ENCODE measurements at regions of chr12 and their contacts with region 1.

Region 1: GRCh38 chr12:12696562-12697383 is 790 bp upstream of the GPR19 start:
- DNase-seq: peak; percentile 87 to 96 (median 94)
- ATAC-seq: peak; percentile 84
- H3K4me3 ChIP-seq: peak overlapping the region; percentile 42 to 88
- H3K4me3 Mint-ChIP-seq: peak overlapping the region; percentile 93
- H3K27ac ChIP-seq: peak overlapping the region; percentile 96 to 100
- H3K27ac Mint-ChIP-seq: peak overlapping the region; percentile 100
- H3K4me1 ChIP-seq: peaks cover 20% of the 10 kb centered on the region
- H3K4me1 Mint-ChIP-seq: peaks cover 29% of the 10 kb centered on the region
- H3K27me3 ChIP-seq: no peaks in the 10 kb centered on the region
- H3K27me3 Mint-ChIP-seq: no peaks in the 10 kb centered on the region
- CTCF ChIP-seq: no peak

Region 2: GRCh38 chr12:12482959-12483358 is 213.8 kb before region 1 on chr12:
- CTCF ChIA-PET with region 1: no interaction called
- POLR2A ChIA-PET with region 1: interaction called, 3 read pairs
- intact Hi-C with region 1: loop called in 1 of 2 experiments (anchors 5 kb)
- DNase-seq: no peak
- ATAC-seq: no peak
- H3K4me3 ChIP-seq: peak overlapping the region in 1 of 2 experiments; percentile 11
- H3K4me3 Mint-ChIP-seq: peak overlapping the region; percentile 47
- H3K27ac ChIP-seq: peak overlapping the region; percentile 73 to 83
- H3K27ac Mint-ChIP-seq: peak overlapping the region; percentile 99
- H3K4me1 ChIP-seq: peaks cover 28% of the 10 kb centered on the region
- H3K4me1 Mint-ChIP-seq: peaks cover 52% of the 10 kb centered on the region
- H3K27me3 ChIP-seq: no peaks in the 10 kb centered on the region
- H3K27me3 Mint-ChIP-seq: no peaks in the 10 kb centered on the region
- CTCF ChIP-seq: no peak

Region 3: DNA sequence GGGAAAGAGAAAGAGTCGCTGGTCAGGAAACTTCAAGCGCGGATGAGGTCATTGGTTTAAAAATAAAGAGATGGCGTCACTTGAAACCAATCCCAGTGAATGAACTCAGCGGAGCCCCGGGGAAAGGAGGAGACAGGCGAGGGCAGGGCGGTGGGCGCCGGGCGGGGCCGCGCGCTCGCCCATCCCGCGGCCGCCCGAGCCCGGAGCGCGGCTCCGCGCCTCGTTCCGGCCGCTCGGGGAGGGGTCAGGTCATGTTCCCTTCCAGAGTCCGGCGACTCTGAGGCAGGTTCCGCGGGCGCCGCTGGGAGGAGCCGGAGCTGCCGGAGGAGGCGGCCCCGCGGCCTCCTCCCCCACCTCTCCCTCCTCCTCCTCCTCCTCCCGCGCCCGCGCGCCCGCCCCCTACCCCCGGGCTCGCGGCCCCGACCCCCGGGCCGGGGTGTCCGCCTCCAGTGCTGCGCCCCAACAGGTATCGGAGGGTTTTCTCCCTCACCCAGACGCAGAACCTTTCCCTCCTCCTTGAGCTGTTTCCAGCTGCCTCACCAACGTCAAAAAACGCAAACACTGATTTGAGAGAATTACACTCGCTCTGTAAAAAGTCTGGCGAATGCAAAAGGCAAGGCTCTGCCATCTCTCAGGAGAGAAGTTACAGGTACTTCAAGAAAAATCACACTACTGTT is 134.1 kb before region 1 on chr12 and contains the start of gene DUSP16:
- CTCF ChIA-PET with region 1: interaction called, 3 read pairs
- POLR2A ChIA-PET with region 1: interaction called, 8 read pairs
- intact Hi-C with region 1: loop called (anchors 1 kb)
- DNase-seq: peak; percentile 50 to 95 (median 75)
- ATAC-seq: peak; percentile 65
- H3K4me3 ChIP-seq: peak within 1 kb of the TSS; percentile 77 to 80
- H3K4me3 Mint-ChIP-seq: peak within 1 kb of the TSS; percentile 95
- H3K27ac ChIP-seq: peak within 1 kb of the TSS; percentile 92 to 96
- H3K27ac Mint-ChIP-seq: peak within 1 kb of the TSS; percentile 99
- H3K4me1 ChIP-seq: peaks cover 16% of the 10 kb centered on the region
- H3K4me1 Mint-ChIP-seq: peaks cover 43% of the 10 kb centered on the region
- H3K27me3 ChIP-seq: no peaks in the 10 kb centered on the region
- H3K27me3 Mint-ChIP-seq: no peaks in the 10 kb centered on the region
- CTCF ChIP-seq: no peak
- total RNA-seq, gene DUSP16: 27.9 to 34.1 TPM

Region 4: DNA sequence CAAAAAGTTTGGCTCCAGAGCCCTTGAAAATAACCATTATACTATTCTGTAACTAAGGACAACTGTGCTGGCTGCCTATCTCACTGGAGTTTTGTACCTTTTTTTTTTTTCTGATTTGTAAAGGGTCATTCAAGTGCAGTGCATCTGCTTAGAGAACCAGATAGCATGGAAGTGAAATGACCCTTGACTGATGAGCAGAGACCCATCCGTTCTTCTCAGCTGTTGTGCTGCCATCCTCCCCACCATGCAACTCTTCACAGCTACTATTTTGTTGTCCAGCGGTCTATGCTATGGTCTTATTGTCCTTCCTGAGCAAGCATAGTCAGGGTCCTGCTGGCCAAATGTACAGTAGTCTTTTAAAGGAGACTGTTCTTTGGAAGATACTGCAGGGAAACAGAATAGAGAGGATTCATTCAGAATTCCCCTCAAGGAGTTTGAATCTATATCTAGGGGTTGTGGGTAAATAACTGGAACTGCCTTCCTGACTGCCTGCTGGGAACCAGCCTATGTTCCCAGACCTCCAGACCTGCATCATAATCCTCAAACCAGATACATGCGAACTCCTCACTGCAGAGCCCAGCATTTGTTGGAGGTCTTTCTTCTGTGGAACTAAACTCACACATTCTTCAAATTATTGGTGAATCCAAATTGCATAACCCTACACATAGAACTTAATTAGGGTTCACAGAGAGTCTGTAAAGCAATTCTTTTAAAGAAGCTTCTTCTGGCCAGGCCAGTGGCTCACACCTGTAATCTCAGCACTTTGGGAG is 41.9 kb before region 1 on chr12:
- CTCF ChIA-PET with region 1: interaction called, 18 read pairs
- POLR2A ChIA-PET with region 1: no interaction called
- intact Hi-C with region 1: loop called in 1 of 2 experiments (anchors 5 kb)
- DNase-seq: no peak
- ATAC-seq: no peak
- H3K4me3 ChIP-seq: no peak overlapping the region
- H3K4me3 Mint-ChIP-seq: no peak overlapping the region
- H3K27ac ChIP-seq: no peak overlapping the region
- H3K27ac Mint-ChIP-seq: no peak overlapping the region
- H3K4me1 ChIP-seq: no peaks in the 10 kb centered on the region
- H3K4me1 Mint-ChIP-seq: peaks cover 11% of the 10 kb centered on the region
- H3K27me3 ChIP-seq: no peaks in the 10 kb centered on the region
- H3K27me3 Mint-ChIP-seq: no peaks in the 10 kb centered on the region
- CTCF ChIP-seq: no peak

Region 5: DNA sequence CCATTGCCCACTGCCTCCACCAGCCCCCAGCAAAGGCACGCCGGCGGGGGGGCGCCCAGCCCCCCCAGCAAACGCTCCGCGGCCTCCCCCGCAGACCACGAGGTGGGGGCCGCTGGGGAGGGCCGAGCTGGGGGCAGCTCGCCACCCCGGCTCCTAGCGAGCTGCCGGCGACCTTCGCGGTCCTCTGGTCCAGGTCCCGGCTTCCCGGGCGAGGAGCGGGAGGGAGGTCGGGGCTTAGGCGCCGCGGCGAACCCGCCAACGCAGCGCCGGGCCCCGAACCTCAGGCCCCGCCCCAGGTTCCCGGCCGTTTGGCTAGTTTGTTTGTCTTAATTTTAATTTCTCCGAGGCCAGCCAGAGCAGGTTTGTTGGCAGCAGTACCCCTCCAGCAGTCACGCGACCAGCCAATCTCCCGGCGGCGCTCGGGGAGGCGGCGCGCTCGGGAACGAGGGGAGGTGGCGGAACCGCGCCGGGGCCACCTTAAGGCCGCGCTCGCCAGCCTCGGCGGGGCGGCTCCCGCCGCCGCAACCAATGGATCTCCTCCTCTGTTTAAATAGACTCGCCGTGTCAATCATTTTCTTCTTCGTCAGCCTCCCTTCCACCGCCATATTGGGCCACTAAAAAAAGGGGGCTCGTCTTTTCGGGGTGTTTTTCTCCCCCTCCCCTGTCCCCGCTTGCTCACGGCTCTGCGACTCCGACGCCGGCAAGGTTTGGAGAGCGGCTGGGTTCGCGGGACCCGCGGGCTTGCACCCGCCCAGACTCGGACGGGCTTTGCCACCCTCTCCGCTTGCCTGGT is 20.2 kb after region 1 on chr12 and contains the start of gene CDKN1B:
- CTCF ChIA-PET with region 1: interaction called, 26 read pairs
- POLR2A ChIA-PET with region 1: interaction called, 339 read pairs
- intact Hi-C with region 1: loop called (anchors 1 kb)
- DNase-seq: peak; percentile 76 to 93 (median 86)
- ATAC-seq: peak; percentile 62
- H3K4me3 ChIP-seq: peak within 1 kb of the TSS; percentile 95 to 96
- H3K4me3 Mint-ChIP-seq: peak within 1 kb of the TSS; percentile 98
- H3K27ac ChIP-seq: peak within 1 kb of the TSS; percentile 93 to 97
- H3K27ac Mint-ChIP-seq: peak within 1 kb of the TSS; percentile 98
- H3K4me1 ChIP-seq: peaks cover 47% of the 10 kb centered on the region
- H3K4me1 Mint-ChIP-seq: peaks cover 66% of the 10 kb centered on the region
- H3K27me3 ChIP-seq: no peaks in the 10 kb centered on the region
- H3K27me3 Mint-ChIP-seq: no peaks in the 10 kb centered on the region
- CTCF ChIP-seq: no peak
- total RNA-seq, gene CDKN1B: 240 to 245 TPM

Region 6: DNA sequence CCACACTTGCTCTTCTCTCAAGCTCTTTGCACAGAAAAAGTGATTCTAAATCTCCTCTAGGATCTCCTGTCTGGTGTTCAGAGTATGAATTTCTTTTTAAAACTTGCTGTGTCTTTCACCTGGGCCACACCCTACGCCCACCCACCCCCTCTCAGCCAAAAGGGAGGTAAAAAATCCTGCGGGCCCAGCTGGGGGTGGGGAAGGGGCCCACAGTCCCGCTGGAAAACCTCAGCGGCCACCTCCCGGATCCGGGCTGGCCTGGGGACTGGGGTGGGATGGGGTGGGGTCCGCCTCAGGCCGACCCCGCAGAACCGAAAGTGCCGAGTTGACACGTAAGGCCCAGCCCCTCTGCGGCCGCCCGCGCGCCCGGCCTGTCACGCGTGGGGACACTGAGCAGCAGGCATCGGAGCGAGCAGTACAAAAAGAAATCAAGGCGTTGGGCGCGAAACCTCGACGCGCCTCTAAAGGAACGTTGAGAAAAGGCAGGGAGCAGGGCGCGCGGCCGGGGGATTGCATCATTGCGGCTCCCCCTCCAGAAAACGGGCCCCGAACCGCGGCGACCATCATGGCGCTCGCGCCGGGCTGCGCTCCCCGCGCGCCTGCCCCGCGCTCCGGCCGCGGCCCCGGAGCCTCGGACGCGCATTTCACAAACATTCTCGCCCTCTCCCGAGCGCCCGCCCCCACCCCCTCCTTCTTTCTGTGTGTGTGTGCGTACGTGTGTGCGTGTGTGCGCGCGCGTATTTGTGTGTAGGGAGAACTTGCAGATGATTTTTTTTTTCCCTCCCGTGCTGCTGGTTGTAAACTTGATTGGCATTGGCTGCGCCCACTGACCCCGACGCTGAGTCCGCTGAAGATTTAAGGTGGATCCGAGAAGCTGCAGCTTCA is 28.1 kb after region 1 on chr12:
- CTCF ChIA-PET with region 1: interaction called, 7 read pairs
- POLR2A ChIA-PET with region 1: interaction called, 339 read pairs
- intact Hi-C with region 1: loop called (anchors 1 kb)
- DNase-seq: peak in 8 of 9 experiments; percentile 82 to 98 (median 86)
- ATAC-seq: peak; percentile 57
- H3K4me3 ChIP-seq: peak overlapping the region; percentile 90 to 92
- H3K4me3 Mint-ChIP-seq: peak overlapping the region; percentile 82
- H3K27ac ChIP-seq: peak overlapping the region; percentile 93 to 97
- H3K27ac Mint-ChIP-seq: peak overlapping the region; percentile 99
- H3K4me1 ChIP-seq: peaks cover 51% of the 10 kb centered on the region
- H3K4me1 Mint-ChIP-seq: peaks cover 52% of the 10 kb centered on the region
- H3K27me3 ChIP-seq: no peaks in the 10 kb centered on the region
- H3K27me3 Mint-ChIP-seq: no peaks in the 10 kb centered on the region
- CTCF ChIP-seq: no peak

Region 7: DNA sequence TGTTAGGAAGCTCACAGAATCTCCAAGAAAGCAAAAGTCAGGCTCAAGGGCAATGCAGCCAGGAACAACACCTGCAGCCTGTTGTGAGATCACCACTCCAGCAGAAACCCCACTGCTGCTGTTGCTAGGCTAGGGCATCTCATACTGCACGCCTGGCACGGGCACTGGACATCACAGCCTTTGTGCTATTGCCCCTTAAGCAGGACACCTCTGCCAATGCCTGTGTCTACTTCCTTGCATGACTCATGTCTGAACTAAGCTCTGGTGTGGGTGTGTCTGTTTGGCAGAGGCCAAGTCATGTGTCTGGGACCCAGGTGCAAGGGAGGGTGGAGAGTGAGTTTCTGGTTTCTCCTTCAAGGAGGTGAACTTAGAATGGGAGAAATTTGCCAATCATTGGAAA is 106.4 kb after region 1 on chr12:
- CTCF ChIA-PET with region 1: no interaction called
- POLR2A ChIA-PET with region 1: interaction called, 8 read pairs
- intact Hi-C with region 1: loop called in 1 of 2 experiments (anchors 1 kb)
- DNase-seq: peak in 5 of 9 experiments; percentile 28 to 46 (median 38)
- ATAC-seq: peak; percentile 35
- H3K4me3 ChIP-seq: no peak overlapping the region
- H3K4me3 Mint-ChIP-seq: no peak overlapping the region
- H3K27ac ChIP-seq: no peak overlapping the region
- H3K27ac Mint-ChIP-seq: peak overlapping the region; percentile 73
- H3K4me1 ChIP-seq: peaks cover 22% of the 10 kb centered on the region
- H3K4me1 Mint-ChIP-seq: peaks cover 41% of the 10 kb centered on the region
- H3K27me3 ChIP-seq: no peaks in the 10 kb centered on the region
- H3K27me3 Mint-ChIP-seq: no peaks in the 10 kb centered on the region
- CTCF ChIP-seq: no peak